Heart left ventricle (tissue), 16 donors: ENCODE measurements at regions of chrX and their contacts with region 1.

Region 1: GRCh38 chrX:67159437-67159836 is 384.4 kb upstream of the AR start:
- DNase-seq: no peak
- ATAC-seq: no peak
- H3K4me3 ChIP-seq: no peak overlapping the region
- H3K27ac ChIP-seq: no peak overlapping the region
- H3K4me1 ChIP-seq: no peaks in the 10 kb centered on the region
- H3K27me3 ChIP-seq: no peaks in the 10 kb centered on the region
- CTCF ChIP-seq: no peak
- POLR2A ChIP-seq: no peak

Region 2: DNA sequence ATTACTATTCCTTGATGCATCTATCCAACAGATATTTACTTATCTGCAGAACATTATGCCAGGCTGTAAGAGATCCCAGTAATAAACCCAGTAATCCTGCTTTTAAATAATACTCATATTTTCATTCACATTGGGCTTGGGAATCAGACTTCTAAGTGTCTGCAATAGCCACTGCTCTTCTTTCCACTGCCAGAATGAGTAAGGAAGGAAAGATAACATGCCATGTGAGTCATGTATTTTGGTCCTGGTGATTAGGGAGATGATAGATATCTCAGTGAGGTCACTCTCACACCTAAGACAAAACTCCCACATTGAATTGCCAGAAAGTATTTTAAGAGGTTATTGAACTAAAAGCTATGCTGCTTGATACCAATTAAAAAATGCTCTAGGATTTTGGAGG is 1009.3 kb before region 1 on chrX:
- intact Hi-C with region 1: loop called in 1 of 10 experiments (anchors 10 kb)
- DNase-seq: no peak
- ATAC-seq: no peak
- H3K4me3 ChIP-seq: no peak overlapping the region
- H3K27ac ChIP-seq: no peak overlapping the region
- H3K4me1 ChIP-seq: no peaks in the 10 kb centered on the region
- H3K27me3 ChIP-seq: peaks cover 0 to 48% (median 0%) of the 10 kb centered on the region in 9 donors
- CTCF ChIP-seq: no peak
- POLR2A ChIP-seq: no peak

Region 3: GRCh38 chrX:67104982-67105757 is 54.3 kb before region 1 on chrX:
- intact Hi-C with region 1: no loop called
- DNase-seq: peak in 3 of 5 donors; percentile 6 to 56 (median 15)
- ATAC-seq: peak; percentile 60 to 89 (median 80)
- H3K4me3 ChIP-seq: no peak overlapping the region
- H3K27ac ChIP-seq: no peak overlapping the region
- H3K4me1 ChIP-seq: peaks cover 0 to 3% (median 0%) of the 10 kb centered on the region in 12 donors
- H3K27me3 ChIP-seq: peaks cover 0 to 8% (median 0%) of the 10 kb centered on the region in 9 donors
- CTCF ChIP-seq: no peak
- POLR2A ChIP-seq: no peak